A673 (cell line): ENCODE measurements at regions of chr4 and their contacts with region 1.

Region 1: GRCh38 chr4:168710353-168710946 is 213.6 kb downstream of the PALLD start:
- DNase-seq: peak; percentile 78
- H3K4me3 ChIP-seq: no peak overlapping the region
- H3K27ac ChIP-seq: no peak overlapping the region
- H3K4me1 ChIP-seq: peaks cover 23% of the 10 kb centered on the region
- H3K27me3 ChIP-seq: no peaks in the 10 kb centered on the region
- CTCF ChIP-seq: peak; percentile 79

Region 2: GRCh38 chr4:168199260-168199957 is 511.0 kb before region 1 on chr4:
- CTCF ChIA-PET with region 1: no interaction called
- POLR2A ChIA-PET with region 1: no interaction called
- intact Hi-C with region 1: loop called (anchors 10 kb)
- DNase-seq: no peak
- H3K4me3 ChIP-seq: no peak overlapping the region
- H3K27ac ChIP-seq: no peak overlapping the region
- H3K4me1 ChIP-seq: no peaks in the 10 kb centered on the region
- H3K27me3 ChIP-seq: no peaks in the 10 kb centered on the region
- CTCF ChIP-seq: no peak

Region 3: DNA sequence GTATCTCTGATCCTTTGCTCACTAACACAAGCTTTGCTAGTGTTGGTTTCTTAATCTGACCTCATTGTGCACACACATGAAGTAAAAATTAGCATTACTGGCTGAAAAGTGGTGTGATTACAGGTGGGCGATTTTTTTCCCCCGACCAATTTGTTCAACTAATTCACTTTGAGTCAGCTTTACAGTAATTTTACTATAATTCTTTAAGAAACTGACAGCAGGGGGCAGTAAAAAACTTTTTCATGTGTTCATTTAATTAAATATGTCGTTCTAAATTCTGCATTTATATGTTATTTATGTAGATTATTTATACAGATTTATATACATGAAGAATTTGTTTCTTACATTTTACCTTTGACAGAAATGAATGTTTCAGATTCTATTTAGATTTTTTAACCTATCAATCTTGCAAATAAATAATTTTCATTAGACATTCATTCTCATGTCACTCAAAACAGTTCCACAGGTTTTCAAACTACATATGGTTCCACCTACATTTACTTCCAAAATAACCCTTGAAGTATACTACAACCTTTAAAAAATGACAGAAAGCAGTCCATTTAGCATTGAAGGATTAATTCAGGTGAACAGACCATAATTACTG is 196.1 kb before region 1 on chr4:
- CTCF ChIA-PET with region 1: no interaction called
- POLR2A ChIA-PET with region 1: no interaction called
- intact Hi-C with region 1: loop called (anchors 10 kb)
- DNase-seq: peak; percentile 67
- H3K4me3 ChIP-seq: no peak overlapping the region
- H3K27ac ChIP-seq: no peak overlapping the region
- H3K4me1 ChIP-seq: peaks cover 4% of the 10 kb centered on the region
- H3K27me3 ChIP-seq: no peaks in the 10 kb centered on the region
- CTCF ChIP-seq: peak; percentile 65

Region 4: GRCh38 chr4:168917138-168917779 is 206.8 kb after region 1 on chr4:
- CTCF ChIA-PET with region 1: interaction called, 3 read pairs
- POLR2A ChIA-PET with region 1: no interaction called
- intact Hi-C with region 1: loop called (anchors 2 kb)
- DNase-seq: peak; percentile 72
- H3K4me3 ChIP-seq: no peak overlapping the region
- H3K27ac ChIP-seq: no peak overlapping the region
- H3K4me1 ChIP-seq: no peaks in the 10 kb centered on the region
- H3K27me3 ChIP-seq: no peaks in the 10 kb centered on the region
- CTCF ChIP-seq: peak; percentile 78

Region 5: DNA sequence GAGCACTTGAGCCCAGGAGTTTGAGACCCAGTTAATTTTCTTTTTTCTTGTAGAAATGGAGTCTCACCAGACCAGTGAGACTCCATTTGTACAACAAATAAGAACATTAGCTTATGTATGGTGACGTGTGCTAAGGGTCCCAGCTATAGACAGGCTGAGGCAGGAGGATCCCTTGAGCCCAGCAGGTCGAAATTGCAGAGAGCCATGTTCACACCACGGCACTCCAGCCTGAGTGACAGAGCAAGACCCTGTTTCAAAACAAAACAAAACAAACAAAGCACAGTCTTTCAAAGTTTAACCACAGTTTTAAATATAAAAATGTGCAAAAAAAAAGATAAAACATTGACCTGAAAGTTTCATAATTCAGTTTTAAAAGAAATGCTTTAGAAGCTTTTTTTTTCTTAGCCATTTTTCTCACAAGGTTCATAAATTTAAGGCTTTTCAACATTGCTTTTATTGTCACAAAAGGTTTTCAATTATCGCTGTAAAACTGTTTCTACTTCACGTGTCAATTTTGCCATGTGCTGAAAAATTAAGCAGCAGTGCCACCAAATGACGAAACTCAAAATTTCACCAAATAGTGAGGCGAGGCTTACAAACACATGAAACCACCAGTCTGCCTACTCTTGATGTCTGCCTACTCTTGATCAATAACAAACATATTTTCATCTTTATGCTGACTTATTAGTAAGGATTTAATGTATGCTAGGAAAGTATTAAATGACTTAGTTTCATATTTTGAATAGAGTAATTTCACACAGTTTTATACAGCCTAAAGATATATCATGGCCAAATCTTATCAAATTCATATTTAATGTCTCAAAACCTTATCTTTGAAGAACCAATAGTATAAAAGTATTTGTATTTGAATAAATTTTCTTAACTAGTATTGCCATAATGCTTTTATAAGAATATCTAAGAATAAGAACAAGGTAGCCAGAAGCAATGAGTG is 775.6 kb after region 1 on chr4:
- CTCF ChIA-PET with region 1: no interaction called
- POLR2A ChIA-PET with region 1: no interaction called
- intact Hi-C with region 1: loop called (anchors 10 kb)
- DNase-seq: peak; percentile 76
- H3K4me3 ChIP-seq: no peak overlapping the region
- H3K27ac ChIP-seq: no peak overlapping the region
- H3K4me1 ChIP-seq: no peaks in the 10 kb centered on the region
- H3K27me3 ChIP-seq: no peaks in the 10 kb centered on the region
- CTCF ChIP-seq: peak; percentile 73